ENCODE measurements at regions of chr1 and their contacts with region 1.

Region 1: DNA sequence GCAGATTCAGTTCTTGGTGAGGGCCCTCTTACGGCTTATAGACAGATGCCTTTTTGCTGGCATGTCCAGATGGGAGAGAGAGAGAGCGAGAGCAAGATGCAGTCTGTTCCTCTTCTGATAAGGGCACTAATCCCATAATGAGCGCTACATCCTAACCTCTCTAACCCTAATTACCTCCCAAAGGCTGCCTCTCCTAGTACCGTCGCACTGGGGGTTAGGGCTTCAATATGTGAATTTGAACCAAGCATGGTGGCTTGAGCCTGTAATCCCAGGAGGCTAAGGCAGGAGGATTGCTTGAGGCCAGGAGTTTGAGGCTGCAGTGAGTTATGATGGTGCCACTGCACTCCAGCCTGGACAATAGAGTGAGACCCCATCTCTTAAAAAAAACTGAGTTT is 10.5 kb upstream of the SDE2 start:
- DNase-seq: no peak
- ATAC-seq: no peak
- H3K4me3 ChIP-seq: no peak overlapping the region
- H3K27ac ChIP-seq: no peak overlapping the region
- H3K4me1 ChIP-seq: no peaks in the 10 kb centered on the region
- H3K27me3 ChIP-seq: peaks cover 23% of the 10 kb centered on the region
- CTCF ChIP-seq: no peak
- POLR2A ChIP-seq: no peak
- RAD21 ChIP-seq: no peak

Region 2: DNA sequence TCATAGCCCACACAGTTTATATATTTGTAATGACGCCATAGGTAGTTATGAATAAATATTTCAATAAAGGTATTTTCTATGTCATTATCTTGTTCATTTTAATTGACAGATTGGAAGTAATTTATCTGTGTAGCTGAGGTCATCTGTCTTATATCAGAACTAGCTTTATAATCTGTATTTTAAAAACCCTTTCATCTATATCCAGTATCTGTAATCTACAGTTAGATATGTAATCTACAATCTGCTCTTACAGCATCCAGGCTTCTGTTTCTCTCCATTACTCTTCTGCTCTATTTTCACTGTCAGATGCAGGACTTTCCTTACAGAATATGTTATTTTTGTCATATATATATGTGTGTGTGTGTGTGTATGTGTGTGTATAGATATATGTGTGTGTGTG is 719.4 kb before region 1 on chr1:
- CTCF ChIA-PET with region 1: no interaction called
- POLR2A ChIA-PET with region 1: no interaction called
- dilution Hi-C with region 1: no loop called
- in situ Hi-C with region 1: no loop called
- intact Hi-C with region 1: no loop called
- DNase-seq: no peak
- ATAC-seq: no peak
- H3K4me3 ChIP-seq: no peak overlapping the region
- H3K27ac ChIP-seq: no peak overlapping the region
- H3K4me1 ChIP-seq: no peaks in the 10 kb centered on the region
- H3K27me3 ChIP-seq: no peaks in the 10 kb centered on the region
- CTCF ChIP-seq: no peak
- POLR2A ChIP-seq: no peak
- RAD21 ChIP-seq: no peak

Region 3: GRCh38 chr1:226054519-226055327 is 45.1 kb after region 1 on chr1:
- CTCF ChIA-PET with region 1: no interaction called
- POLR2A ChIA-PET with region 1: no interaction called
- dilution Hi-C with region 1: no loop called
- in situ Hi-C with region 1: loop called (anchors 5 kb)
- intact Hi-C with region 1: no loop called
- DNase-seq: peak; percentile 26
- ATAC-seq: peak; percentile 72
- H3K4me3 ChIP-seq: no peak overlapping the region
- H3K27ac ChIP-seq: no peak overlapping the region
- H3K4me1 ChIP-seq: 0 out of 2 replicates have a peak, but pooled peaks cover 2% of the 10 kb centered on the region
- H3K27me3 ChIP-seq: no peaks in the 10 kb centered on the region
- CTCF ChIP-seq: no peak
- POLR2A ChIP-seq: no peak
- RAD21 ChIP-seq: no peak